Transverse colon (tissue), 4 donors: ENCODE measurements at regions of chr7 and their contacts with region 1.

Region 1: GRCh38 chr7:16739863-16740622 is 13.5 kb upstream of the TSPAN13 start:
- DNase-seq: peak; percentile 26
- H3K4me3 ChIP-seq: no peak overlapping the region
- H3K27ac ChIP-seq: peak overlapping the region in 2 of 4 donors; percentile 15 to 56
- H3K4me1 ChIP-seq: peaks cover 3 to 21% (median 12%) of the 10 kb centered on the region in 4 donors
- H3K27me3 ChIP-seq: no peaks in the 10 kb centered on the region
- CTCF ChIP-seq: no peak
- EP300 ChIP-seq: no peak
- POLR2A ChIP-seq: no peak

Region 2: GRCh38 chr7:16764942-16765341 is 24.9 kb after region 1 on chr7:
- in situ Hi-C with region 1: no loop called
- intact Hi-C with region 1: loop called (anchors 1 kb)
- DNase-seq: no peak
- H3K4me3 ChIP-seq: no peak overlapping the region
- H3K27ac ChIP-seq: peak overlapping the region; percentile 32 to 57 (median 48)
- H3K4me1 ChIP-seq: peaks cover 0 to 35% (median 9%) of the 10 kb centered on the region in 4 donors
- H3K27me3 ChIP-seq: no peaks in the 10 kb centered on the region
- CTCF ChIP-seq: no peak
- EP300 ChIP-seq: no peak
- POLR2A ChIP-seq: no peak